H1 (cell line): ENCODE measurements at regions of chr5 and their contacts with region 1.

Region 1: DNA sequence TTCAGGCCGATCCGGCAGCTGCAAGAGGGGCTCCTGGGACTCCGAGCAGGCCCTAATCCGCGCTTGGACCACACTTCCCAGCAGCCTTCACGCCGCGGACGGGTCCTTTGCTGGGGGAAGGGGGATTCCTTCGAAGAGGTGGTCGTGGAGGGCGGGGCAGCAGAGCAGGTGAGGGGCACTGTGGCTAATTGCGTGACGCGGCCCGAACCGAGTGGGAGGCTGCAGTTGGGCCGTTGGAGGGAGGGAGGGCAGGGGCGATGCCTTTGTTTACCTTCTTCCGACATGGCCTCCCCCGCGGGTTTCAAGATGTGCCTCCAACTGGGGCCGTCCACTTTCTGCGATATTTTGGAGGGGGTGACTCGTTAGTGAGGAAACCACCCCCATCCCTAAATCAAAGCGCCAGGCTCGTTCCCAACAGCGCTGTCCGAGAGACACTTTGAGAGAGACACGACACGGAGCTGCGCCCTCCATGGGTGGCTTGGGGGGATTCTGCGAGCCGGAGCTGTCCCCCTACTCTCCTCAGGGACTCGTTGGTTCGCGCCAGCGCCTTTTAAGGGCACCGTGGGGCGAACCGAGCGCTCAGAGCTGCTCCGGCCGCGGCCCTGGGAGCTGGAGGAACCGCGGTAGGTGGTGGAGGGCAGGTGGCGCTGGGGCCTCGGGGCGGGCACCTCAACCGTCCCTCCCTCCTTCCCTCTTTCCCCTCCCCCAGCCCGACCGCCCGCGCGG is at the start of gene FAM53C:
- DNase-seq: peak; percentile 71 to 98
- H3K4me3 ChIP-seq: peak within 1 kb of the TSS; percentile 68 to 95 (median 91)
- H3K27ac ChIP-seq: peak within 1 kb of the TSS; percentile 100
- H3K4me1 ChIP-seq: peaks cover 0 to 5% (median 2%) of the 10 kb centered on the region in 4 experiments; a peak in 3 of 7 replicates
- H3K27me3 ChIP-seq: no peaks in the 10 kb centered on the region
- CTCF ChIP-seq: no peak
- EP300 ChIP-seq: peak in 1 of 2 experiments; percentile 98; a peak in 2 of 3 replicates
- POLR2A ChIP-seq: peak; percentile 99 to 100
- RAD21 ChIP-seq: no peak
- total RNA-seq, gene FAM53C: 57.6 and 58.9 TPM in 2 replicates

Region 2: GRCh38 chr5:138159666-138160065 is 178.2 kb before region 1 on chr5:
- CTCF ChIA-PET with region 1: no interaction called
- POLR2A ChIA-PET with region 1: no interaction called
- DNase-seq: no peak
- H3K4me3 ChIP-seq: no peak overlapping the region
- H3K27ac ChIP-seq: no peak overlapping the region
- H3K4me1 ChIP-seq: no peaks in the 10 kb centered on the region
- H3K27me3 ChIP-seq: no peaks in the 10 kb centered on the region
- CTCF ChIP-seq: no peak
- EP300 ChIP-seq: no peak
- POLR2A ChIP-seq: no peak
- RAD21 ChIP-seq: no peak

Region 3: GRCh38 chr5:138178516-138179276 is 159.2 kb before region 1 on chr5 and contains the starts of genes BRD8 and KIF20A:
- CTCF ChIA-PET with region 1: no interaction called
- POLR2A ChIA-PET with region 1: interaction called, 18 read pairs
- DNase-seq: peak; percentile 86 to 90
- H3K4me3 ChIP-seq: peak within 1 kb of the TSS; percentile 91 to 100 (median 96)
- H3K27ac ChIP-seq: peak within 1 kb of the TSS; percentile 91
- H3K4me1 ChIP-seq: no peaks in the 10 kb centered on the region; a peak in 2 of 7 replicates
- H3K27me3 ChIP-seq: no peaks in the 10 kb centered on the region
- CTCF ChIP-seq: no peak
- EP300 ChIP-seq: no peak
- POLR2A ChIP-seq: peak; percentile 82 to 84
- RAD21 ChIP-seq: no peak
- total RNA-seq, gene BRD8: 75.8 and 78.5 TPM in 2 replicates
- total RNA-seq, gene KIF20A: 67.1 and 68.1 TPM in 2 replicates

Region 4: DNA sequence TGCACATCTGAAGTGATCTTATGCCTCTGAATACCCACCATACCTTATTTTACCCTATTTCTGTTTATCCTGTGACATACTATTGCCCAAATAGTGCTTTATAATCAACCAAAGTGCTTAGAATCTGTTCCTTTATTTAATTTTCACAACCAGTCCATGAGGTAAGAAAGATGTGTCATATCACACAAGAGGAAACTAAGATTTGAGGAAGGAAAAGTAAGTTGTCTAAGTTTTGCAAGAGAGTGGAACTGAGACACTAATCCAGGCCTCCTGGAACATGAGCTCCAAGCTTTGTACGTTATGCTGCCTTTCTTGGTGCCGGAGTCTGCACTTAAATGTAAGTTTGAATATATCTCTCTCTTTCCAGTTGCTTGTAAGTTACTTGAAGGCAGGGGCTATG is 31.9 kb after region 1 on chr5:
- CTCF ChIA-PET with region 1: no interaction called
- POLR2A ChIA-PET with region 1: interaction called, 10 read pairs
- DNase-seq: no peak
- H3K4me3 ChIP-seq: no peak overlapping the region
- H3K27ac ChIP-seq: no peak overlapping the region
- H3K4me1 ChIP-seq: no peaks in the 10 kb centered on the region
- H3K27me3 ChIP-seq: no peaks in the 10 kb centered on the region
- CTCF ChIP-seq: no peak
- EP300 ChIP-seq: no peak
- POLR2A ChIP-seq: no peak
- RAD21 ChIP-seq: no peak

Region 5: DNA sequence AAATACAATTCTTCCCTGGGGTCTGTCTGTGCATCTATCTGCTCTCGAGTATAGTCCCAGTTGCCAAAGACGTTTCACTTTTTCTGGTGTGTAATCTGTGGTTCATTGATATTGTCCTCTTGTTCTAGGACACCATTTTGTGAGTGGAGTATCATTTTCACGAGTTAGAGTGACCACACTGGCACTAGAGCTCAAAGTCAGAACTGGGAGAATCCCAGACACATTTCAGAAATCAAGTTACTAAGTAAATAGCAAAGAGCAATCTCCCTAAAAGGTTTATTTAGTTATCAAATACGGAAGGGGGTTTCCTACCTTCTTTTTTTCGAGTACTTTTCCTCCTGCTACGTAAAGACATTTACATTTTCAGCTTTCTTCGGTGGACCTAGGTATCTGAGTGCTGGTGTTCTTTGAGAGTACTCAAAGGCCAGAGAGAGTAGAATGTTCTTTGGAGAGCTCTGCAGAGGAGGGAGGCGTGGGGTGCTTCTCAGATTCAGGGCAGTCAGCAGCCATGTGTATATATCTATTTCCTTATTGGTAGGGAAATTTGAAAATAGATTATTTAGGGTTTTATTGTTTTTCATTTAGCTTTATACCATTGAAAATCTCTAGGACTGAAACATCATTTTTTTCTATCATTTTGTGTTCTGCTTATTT is 246.3 kb after region 1 on chr5:
- CTCF ChIA-PET with region 1: no interaction called
- POLR2A ChIA-PET with region 1: no interaction called
- DNase-seq: no peak
- H3K4me3 ChIP-seq: no peak overlapping the region
- H3K27ac ChIP-seq: no peak overlapping the region
- H3K4me1 ChIP-seq: no peaks in the 10 kb centered on the region
- H3K27me3 ChIP-seq: no peaks in the 10 kb centered on the region
- CTCF ChIP-seq: no peak
- EP300 ChIP-seq: no peak
- POLR2A ChIP-seq: no peak
- RAD21 ChIP-seq: no peak